Calu3 (cell line): ENCODE measurements at regions of chr9 and their contacts with region 1.

Region 1: DNA sequence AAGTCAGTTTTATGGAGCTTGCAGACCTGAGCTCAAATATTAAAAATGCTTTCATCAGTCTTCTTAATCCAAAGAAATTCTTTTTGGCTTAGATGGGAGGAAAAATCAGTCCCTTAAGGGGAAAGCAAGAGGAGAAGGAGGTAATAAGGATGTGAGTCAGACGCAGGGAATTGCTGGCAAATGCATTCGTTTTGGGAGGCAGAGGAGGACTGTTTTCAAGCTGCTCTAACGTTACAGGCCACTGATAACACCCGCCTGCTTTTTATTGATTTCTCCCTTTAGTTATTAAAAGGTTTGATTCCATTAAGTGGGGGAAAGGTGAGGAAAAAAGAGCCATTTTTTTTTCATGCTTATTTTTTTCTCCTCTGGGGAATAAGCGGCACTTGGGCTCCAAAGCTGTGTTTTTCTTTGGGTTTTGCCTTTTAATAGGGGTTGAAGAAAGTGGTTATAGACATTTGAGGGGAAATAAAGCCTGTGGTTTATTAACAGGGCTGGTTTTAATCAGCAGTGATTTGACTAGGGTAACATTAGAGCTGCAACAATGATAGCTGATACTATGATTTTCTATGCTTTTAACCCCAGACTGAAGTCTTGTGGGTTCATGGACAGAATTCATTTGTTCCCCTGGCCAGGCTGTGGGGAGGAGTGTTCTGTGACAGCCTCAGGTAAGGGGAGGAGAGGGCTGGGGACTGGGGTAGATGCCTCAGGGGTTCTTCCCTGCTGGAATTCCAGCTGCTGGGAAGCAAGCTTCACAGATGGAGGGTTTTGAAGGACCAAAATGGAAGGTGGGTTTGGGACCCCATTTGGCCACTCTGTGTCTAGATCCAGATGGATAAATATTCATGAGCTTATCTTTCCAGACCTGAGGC is 225.2 kb downstream of the GAS1 start:
- DNase-seq: peak; percentile 32
- H3K4me3 Mint-ChIP-seq: peak overlapping the region; percentile 49
- H3K27ac Mint-ChIP-seq: peak overlapping the region; percentile 88
- H3K4me1 Mint-ChIP-seq: peaks cover 18% of the 10 kb centered on the region
- H3K27me3 Mint-ChIP-seq: no peaks in the 10 kb centered on the region
- CTCF ChIP-seq: no peak

Region 2: GRCh38 chr9:86766912-86767311 is 44.8 kb after region 1 on chr9:
- CTCF ChIA-PET with region 1: no interaction called
- intact Hi-C with region 1: loop called (anchors 1 kb)
- DNase-seq: peak; percentile 79
- H3K4me3 Mint-ChIP-seq: no peak overlapping the region
- H3K27ac Mint-ChIP-seq: peak overlapping the region; percentile 85
- H3K4me1 Mint-ChIP-seq: peaks cover 27% of the 10 kb centered on the region
- H3K27me3 Mint-ChIP-seq: no peaks in the 10 kb centered on the region
- CTCF ChIP-seq: no peak